Naive thymus-derived CD4-positive, alpha-beta T cell (primary cell): ENCODE measurements at regions of chr9 and their contacts with region 1.

Region 1: GRCh38 chr9:94860968-94861871 is 134.7 kb downstream of the AOPEP start:
- DNase-seq: peak; percentile 31 to 86 (median 78)
- ATAC-seq: peak; percentile 93
- H3K4me3 ChIP-seq: peak overlapping the region; percentile 40
- H3K4me3 Mint-ChIP-seq: peak overlapping the region; percentile 73 to 85 (median 82)
- H3K27ac ChIP-seq: no peak overlapping the region
- H3K27ac Mint-ChIP-seq: peak overlapping the region; percentile 25 to 96 (median 92)
- H3K4me1 ChIP-seq: peaks cover 25 to 26% of the 10 kb centered on the region in 2 donors
- H3K4me1 Mint-ChIP-seq: peaks cover 26 to 55% (median 47%) of the 10 kb centered on the region in 7 donors
- H3K27me3 ChIP-seq: no peaks in the 10 kb centered on the region
- H3K27me3 Mint-ChIP-seq: no peaks in the 10 kb centered on the region

Region 2: DNA sequence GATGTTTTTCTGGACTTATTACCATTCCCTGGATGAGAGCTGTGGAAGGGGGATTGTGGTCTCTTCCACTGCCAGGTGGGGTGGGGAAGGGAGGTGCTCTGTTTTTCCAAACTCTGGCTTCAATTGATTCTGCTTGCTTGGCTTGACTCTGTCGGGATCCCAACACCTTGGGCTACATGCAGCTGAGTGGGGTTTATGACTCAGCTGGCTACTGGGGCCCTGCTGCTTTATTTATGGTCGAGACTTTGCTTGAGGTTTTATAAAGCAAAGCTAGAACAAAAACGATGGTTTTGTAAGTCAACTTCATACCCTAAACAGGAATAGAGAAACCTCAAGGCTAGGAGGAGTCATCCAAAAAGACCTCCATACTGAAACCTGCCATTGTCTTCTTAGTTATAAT is 58.4 kb before region 1 on chr9:
- CTCF ChIA-PET with region 1: no interaction called
- POLR2A ChIA-PET with region 1: no interaction called
- intact Hi-C with region 1: loop called in 1 of 2 experiments (anchors 5 kb)
- DNase-seq: peak in 1 of 9 donors; percentile 27
- ATAC-seq: no peak
- H3K4me3 ChIP-seq: no peak overlapping the region
- H3K4me3 Mint-ChIP-seq: peak overlapping the region in 1 of 10 donors; percentile 16
- H3K27ac ChIP-seq: no peak overlapping the region
- H3K27ac Mint-ChIP-seq: no peak overlapping the region
- H3K4me1 ChIP-seq: no peaks in the 10 kb centered on the region
- H3K4me1 Mint-ChIP-seq: peaks cover 0 to 25% (median 2%) of the 10 kb centered on the region in 7 donors
- H3K27me3 ChIP-seq: no peaks in the 10 kb centered on the region
- H3K27me3 Mint-ChIP-seq: no peaks in the 10 kb centered on the region

Region 3: DNA sequence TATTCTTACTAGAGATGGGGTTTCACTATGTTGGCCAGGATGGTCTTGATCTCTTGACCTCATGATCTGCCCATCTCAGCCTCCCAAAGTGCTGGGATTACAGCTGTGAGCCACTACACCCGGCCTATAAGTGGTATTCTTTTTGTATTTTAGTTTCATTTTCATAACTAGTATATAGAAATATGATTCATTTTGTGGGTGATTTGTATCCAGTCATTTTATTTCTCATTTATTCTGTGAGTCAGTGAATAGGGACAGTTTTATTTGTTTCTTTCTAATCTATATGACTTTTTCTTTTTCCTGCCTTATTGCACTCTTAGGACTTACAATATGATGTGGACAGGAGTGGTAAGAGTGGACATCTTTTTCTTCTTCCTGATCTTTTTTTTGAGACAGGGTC is 21.8 kb before region 1 on chr9:
- CTCF ChIA-PET with region 1: no interaction called
- POLR2A ChIA-PET with region 1: no interaction called
- intact Hi-C with region 1: loop called in 1 of 2 experiments (anchors 2 kb)
- DNase-seq: no peak
- ATAC-seq: no peak
- H3K4me3 ChIP-seq: no peak overlapping the region
- H3K4me3 Mint-ChIP-seq: no peak overlapping the region
- H3K27ac ChIP-seq: no peak overlapping the region
- H3K27ac Mint-ChIP-seq: peak overlapping the region in 1 of 9 donors; percentile 17
- H3K4me1 ChIP-seq: peaks cover 0 to 3% of the 10 kb centered on the region in 2 donors
- H3K4me1 Mint-ChIP-seq: peaks cover 2 to 38% (median 20%) of the 10 kb centered on the region in 7 donors
- H3K27me3 ChIP-seq: no peaks in the 10 kb centered on the region
- H3K27me3 Mint-ChIP-seq: no peaks in the 10 kb centered on the region

Region 4: DNA sequence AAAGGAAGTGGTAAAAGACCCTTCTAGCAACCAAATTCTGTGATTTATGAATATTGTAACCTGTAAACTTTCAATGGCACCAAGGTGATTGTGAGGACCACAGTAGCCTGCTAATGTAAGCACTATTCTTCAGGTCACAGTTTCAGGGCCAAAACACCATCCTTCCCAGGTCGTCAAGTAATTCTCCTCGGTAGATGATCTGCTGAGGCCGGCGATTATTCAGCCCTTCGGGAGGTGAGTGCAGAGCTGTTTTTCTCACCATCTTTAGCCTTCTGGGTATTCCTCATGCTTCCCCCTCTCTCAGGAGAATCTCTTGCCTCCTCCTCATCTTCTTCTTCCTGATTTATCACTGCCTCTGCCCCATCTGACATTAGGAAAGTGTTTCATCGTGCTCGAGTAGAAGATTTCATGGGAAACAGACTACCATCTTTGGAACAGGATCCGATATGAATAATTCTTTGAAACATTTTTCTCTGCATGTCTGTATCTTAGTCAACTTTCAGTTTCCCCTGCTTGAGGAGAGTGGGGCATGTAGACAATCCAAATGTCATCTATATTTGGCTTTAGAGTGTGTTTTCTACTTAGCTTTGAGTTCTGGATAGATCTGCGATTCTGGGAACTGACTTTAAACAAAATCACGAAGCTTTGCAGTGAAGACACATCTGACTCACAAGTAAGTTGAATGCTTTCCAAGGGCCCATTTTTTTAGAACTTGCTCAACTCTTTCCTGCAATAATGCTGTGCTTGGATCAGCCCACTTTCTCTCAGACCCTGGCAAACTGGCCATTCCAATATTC is 39.2 kb after region 1 on chr9:
- CTCF ChIA-PET with region 1: no interaction called
- POLR2A ChIA-PET with region 1: no interaction called
- intact Hi-C with region 1: loop called in 1 of 2 experiments (anchors 5 kb)
- DNase-seq: no peak
- ATAC-seq: no peak
- H3K4me3 ChIP-seq: no peak overlapping the region
- H3K4me3 Mint-ChIP-seq: peak overlapping the region in 1 of 10 donors; percentile 68
- H3K27ac ChIP-seq: no peak overlapping the region
- H3K27ac Mint-ChIP-seq: peak overlapping the region in 2 of 9 donors; percentile 62 to 84
- H3K4me1 ChIP-seq: no peaks in the 10 kb centered on the region
- H3K4me1 Mint-ChIP-seq: peaks cover 0 to 36% (median 0%) of the 10 kb centered on the region in 7 donors
- H3K27me3 ChIP-seq: no peaks in the 10 kb centered on the region
- H3K27me3 Mint-ChIP-seq: peaks cover 0 to 4% (median 0%) of the 10 kb centered on the region in 5 donors

Region 5: GRCh38 chr9:94917840-94918753 is 56.9 kb after region 1 on chr9:
- CTCF ChIA-PET with region 1: interaction called, 3 read pairs
- POLR2A ChIA-PET with region 1: no interaction called
- intact Hi-C with region 1: loop called in 1 of 2 experiments (anchors 1 kb)
- DNase-seq: peak in 4 of 9 donors; percentile 13 to 31 (median 20)
- ATAC-seq: peak; percentile 74
- H3K4me3 ChIP-seq: no peak overlapping the region
- H3K4me3 Mint-ChIP-seq: no peak overlapping the region
- H3K27ac ChIP-seq: no peak overlapping the region
- H3K27ac Mint-ChIP-seq: peak overlapping the region in 2 of 9 donors; percentile 36
- H3K4me1 ChIP-seq: no peaks in the 10 kb centered on the region
- H3K4me1 Mint-ChIP-seq: peaks cover 0 to 5% (median 0%) of the 10 kb centered on the region in 7 donors
- H3K27me3 ChIP-seq: no peaks in the 10 kb centered on the region
- H3K27me3 Mint-ChIP-seq: no peaks in the 10 kb centered on the region

Region 6: GRCh38 chr9:94952565-94953373 is 91.5 kb after region 1 on chr9:
- CTCF ChIA-PET with region 1: no interaction called
- POLR2A ChIA-PET with region 1: no interaction called
- intact Hi-C with region 1: loop called (anchors 2 to 5 kb)
- DNase-seq: peak in 7 of 9 donors; percentile 24 to 66 (median 48)
- ATAC-seq: peak; percentile 82
- H3K4me3 ChIP-seq: peak overlapping the region; percentile 1
- H3K4me3 Mint-ChIP-seq: peak overlapping the region; percentile 30 to 83 (median 72)
- H3K27ac ChIP-seq: no peak overlapping the region
- H3K27ac Mint-ChIP-seq: peak overlapping the region; percentile 14 to 86 (median 74)
- H3K4me1 ChIP-seq: peaks cover 20 to 26% of the 10 kb centered on the region in 2 donors
- H3K4me1 Mint-ChIP-seq: peaks cover 26 to 44% (median 36%) of the 10 kb centered on the region in 7 donors
- H3K27me3 ChIP-seq: no peaks in the 10 kb centered on the region
- H3K27me3 Mint-ChIP-seq: no peaks in the 10 kb centered on the region

Region 7: DNA sequence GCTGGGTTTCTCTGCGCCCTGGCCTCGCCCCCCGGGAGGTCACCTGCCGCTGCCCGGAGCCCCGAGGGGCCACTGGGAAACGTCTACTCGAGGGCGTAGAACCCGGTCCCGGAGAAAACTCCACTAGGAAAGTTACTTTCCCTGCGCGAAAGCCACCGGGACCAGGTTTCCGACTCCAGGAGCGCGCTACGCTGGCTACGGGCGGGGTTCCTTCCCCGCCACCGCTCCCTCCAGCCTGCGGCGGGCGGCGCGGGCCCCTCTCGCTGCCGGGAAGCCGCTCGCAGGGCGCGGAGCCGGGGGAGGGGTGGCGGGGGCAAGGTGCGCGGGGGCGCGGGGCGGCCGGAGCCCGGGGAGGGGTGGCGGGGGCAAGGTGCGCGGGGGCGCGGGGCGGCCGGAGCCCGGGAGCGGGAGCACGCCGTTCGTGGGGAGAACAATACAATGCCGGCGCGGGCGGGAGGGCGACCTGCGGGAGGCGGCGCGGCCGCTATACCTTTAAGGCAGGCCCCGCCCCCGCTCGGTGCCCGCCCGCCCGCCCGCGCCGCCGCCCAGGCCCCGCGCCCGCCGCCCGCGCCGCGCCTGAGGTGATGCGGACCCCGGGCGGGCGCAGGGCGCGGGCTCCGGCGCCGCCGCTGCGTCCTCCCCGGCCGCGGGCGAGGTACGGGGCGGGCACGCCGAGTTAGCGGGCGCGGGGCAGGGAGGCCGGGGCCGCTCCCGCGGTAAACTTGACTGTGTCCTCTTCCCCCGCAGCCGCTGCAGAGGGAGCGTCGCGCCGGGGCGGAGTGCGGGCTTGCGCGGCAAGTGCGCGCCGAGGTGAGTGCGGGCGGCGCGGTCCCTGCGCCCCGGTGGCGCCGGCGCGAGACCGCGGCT is 143.4 kb after region 1 on chr9:
- CTCF ChIA-PET with region 1: no interaction called
- POLR2A ChIA-PET with region 1: no interaction called
- intact Hi-C with region 1: loop called in 1 of 2 experiments (anchors 2 kb)
- DNase-seq: peak in 6 of 9 donors; percentile 7 to 63 (median 18)
- ATAC-seq: peak; percentile 74
- H3K4me3 ChIP-seq: peak overlapping the region; percentile 51
- H3K4me3 Mint-ChIP-seq: peak overlapping the region in 5 of 10 donors; percentile 80 to 87 (median 81)
- H3K27ac ChIP-seq: no peak overlapping the region
- H3K27ac Mint-ChIP-seq: peak overlapping the region in 1 of 9 donors; percentile 76
- H3K4me1 ChIP-seq: peaks cover 7% of the 10 kb centered on the region in 2 donors
- H3K4me1 Mint-ChIP-seq: peaks cover 0 to 27% (median 9%) of the 10 kb centered on the region in 7 donors
- H3K27me3 ChIP-seq: peaks cover 11 to 13% of the 10 kb centered on the region in 2 donors
- H3K27me3 Mint-ChIP-seq: peaks cover 28 to 41% (median 37%) of the 10 kb centered on the region in 5 donors